Esophagus muscularis mucosa (tissue), 4 donors: ENCODE measurements at regions of chr6 and their contacts with region 1.

Region 1: GRCh38 chr6:84428300-84428907 is 201.0 kb upstream of the CEP162 start:
- DNase-seq: no peak
- H3K4me3 ChIP-seq: no peak overlapping the region
- H3K27ac ChIP-seq: no peak overlapping the region
- H3K4me1 ChIP-seq: no peaks in the 10 kb centered on the region
- H3K27me3 ChIP-seq: peaks cover 0 to 33% (median 0%) of the 10 kb centered on the region in 4 donors
- CTCF ChIP-seq: peak; percentile 64 to 76 (median 68)
- EP300 ChIP-seq: no peak
- POLR2A ChIP-seq: no peak

Region 2: DNA sequence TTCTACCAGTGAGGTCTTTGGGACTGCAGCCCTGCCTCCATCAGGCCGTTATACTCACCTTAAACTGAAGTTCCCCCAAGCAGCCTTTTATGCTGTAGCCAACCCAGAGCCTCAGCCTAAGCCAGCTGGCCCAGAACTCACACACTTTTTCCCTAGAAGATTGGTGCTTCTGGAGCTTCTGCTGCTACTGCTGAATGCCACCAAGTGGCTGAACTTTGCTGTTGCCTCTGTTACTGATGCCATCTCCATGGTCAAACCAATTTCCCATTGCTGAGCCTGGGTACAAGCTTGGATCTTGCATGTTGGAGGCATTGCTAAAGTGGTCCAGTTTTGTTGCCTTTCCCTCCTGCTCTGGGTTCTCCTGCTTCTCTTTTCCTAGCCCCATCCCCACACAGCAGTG is 351.0 kb after region 1 on chr6:
- intact Hi-C with region 1: loop called (anchors 5 kb)
- DNase-seq: no peak
- H3K4me3 ChIP-seq: no peak overlapping the region
- H3K27ac ChIP-seq: no peak overlapping the region
- H3K4me1 ChIP-seq: peaks cover 5 to 7% (median 7%) of the 10 kb centered on the region in 4 donors
- H3K27me3 ChIP-seq: peaks cover 9 to 63% (median 17%) of the 10 kb centered on the region in 4 donors
- CTCF ChIP-seq: no peak
- EP300 ChIP-seq: no peak
- POLR2A ChIP-seq: no peak

Region 3: DNA sequence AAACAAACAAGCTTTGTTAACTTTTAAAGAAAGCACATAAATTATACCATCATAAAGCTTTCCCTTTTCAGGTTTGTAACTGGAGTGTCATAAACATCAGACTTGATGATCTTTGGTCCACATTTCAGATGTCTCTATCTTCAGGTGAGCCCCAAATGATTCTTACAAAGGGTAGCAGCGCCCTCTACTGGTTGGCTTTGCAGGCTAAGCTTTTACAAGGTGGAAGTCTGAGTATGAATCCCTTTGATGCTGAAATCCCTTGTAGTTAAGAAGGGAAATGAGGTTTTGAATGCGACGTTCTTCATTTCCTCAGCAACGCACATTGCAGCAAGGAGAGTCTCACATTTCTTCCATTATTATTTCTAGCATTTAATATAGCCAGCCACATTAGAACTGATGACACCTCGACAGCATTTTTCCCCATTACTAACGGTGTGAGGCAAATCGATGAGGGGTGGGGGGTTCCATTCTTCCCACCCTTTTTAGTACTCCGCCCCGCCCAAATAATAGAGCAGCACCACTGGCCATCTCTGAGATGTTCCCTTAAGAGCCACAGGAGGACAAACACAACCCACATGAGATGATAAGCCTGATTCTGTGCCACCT is 895.1 kb after region 1 on chr6:
- intact Hi-C with region 1: loop called (anchors 5 kb)
- DNase-seq: no peak
- H3K4me3 ChIP-seq: no peak overlapping the region
- H3K27ac ChIP-seq: no peak overlapping the region
- H3K4me1 ChIP-seq: no peaks in the 10 kb centered on the region
- H3K27me3 ChIP-seq: no peaks in the 10 kb centered on the region
- CTCF ChIP-seq: peak; percentile 64 to 76 (median 75)
- EP300 ChIP-seq: no peak
- POLR2A ChIP-seq: no peak